Calu3 (cell line): ENCODE measurements at regions of chr3 and their contacts with region 1.

Region 1: GRCh38 chr3:149603126-149604074 is 54.4 kb downstream of the WWTR1 start:
- DNase-seq: peak; percentile 78
- H3K4me3 Mint-ChIP-seq: peak overlapping the region; percentile 58
- H3K27ac Mint-ChIP-seq: peak overlapping the region; percentile 86
- H3K4me1 Mint-ChIP-seq: peaks cover 78% of the 10 kb centered on the region
- H3K27me3 Mint-ChIP-seq: no peaks in the 10 kb centered on the region
- CTCF ChIP-seq: no peak

Region 2: DNA sequence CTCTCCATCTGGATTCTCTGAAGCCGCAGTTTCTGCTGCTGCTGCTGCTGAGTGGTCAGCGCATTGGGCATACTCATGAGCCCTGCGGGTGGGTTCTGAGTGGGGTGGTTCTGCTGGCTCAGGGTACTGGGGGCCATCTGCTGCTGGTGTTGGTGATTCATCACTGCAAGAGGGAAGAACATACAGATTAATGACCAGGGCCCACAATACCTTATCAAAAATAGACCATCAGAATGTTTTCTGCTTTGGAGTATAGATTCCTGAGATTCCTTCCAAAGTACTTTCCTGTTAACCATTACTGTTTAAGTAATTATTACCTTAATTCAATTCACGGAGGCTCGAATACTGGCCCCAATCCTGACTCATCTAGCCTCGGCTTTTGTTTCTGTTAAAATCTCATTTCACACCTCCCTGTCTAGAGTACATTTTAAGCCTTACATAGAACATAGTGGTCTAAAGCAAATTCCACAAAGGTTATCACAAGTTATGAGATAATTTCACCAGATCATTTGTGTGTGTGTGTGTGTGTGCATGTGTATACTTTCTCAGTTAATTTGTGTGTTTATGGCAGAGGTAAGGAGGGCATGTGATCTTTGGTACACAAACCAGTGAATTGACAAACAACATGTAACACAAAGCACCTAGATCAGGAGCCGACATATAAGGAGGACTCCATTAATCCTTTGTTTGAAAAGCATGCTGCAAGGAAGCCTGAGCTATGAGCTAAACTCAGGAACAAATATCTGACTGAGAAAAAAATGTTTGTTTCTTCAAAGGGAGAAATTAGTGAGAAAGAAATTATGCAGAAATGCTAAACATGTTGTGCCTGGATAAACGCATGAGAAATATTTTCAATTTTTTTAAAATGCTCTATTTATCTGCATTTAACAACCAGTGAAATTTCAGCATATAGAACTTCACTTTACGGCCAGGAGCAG is 60.8 kb before region 1 on chr3:
- CTCF ChIA-PET with region 1: interaction called, 5 read pairs
- intact Hi-C with region 1: loop called (anchors 2 kb)
- DNase-seq: peak; percentile 74
- H3K4me3 Mint-ChIP-seq: peak overlapping the region; percentile 64
- H3K27ac Mint-ChIP-seq: peak overlapping the region; percentile 98
- H3K4me1 Mint-ChIP-seq: peaks cover 85% of the 10 kb centered on the region
- H3K27me3 Mint-ChIP-seq: no peaks in the 10 kb centered on the region
- CTCF ChIP-seq: no peak

Region 3: DNA sequence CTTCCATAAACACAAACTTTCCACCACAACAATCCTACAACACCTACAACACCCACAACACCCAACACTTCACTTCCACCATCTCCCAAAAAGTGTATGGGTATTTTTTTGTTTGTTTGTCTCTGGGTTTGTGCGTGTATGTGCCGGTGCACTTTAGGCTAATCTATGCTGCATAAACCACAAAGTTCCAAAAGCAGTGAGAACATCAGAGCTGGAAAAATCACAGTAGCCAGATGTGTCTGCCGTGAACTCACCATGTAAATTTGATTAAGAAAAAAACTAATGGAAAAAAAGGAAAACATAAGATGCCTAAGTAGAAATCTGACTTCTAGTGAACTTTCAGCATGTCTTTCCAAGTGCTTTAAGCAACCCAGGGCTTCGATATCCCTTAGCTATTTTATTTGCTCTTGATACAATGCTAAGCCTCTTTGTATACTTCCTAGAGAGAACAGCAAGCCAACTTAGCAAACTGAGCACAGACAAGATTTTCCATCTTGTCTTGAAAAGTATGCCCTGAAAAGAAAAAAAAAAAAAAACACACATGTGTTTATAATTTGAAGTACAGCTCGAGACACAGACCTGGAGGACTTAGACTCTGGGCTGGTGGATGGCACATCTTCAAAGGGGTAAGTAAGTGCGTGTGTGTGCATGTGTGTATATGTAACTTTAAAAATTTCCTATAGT is 37.0 kb before region 1 on chr3:
- CTCF ChIA-PET with region 1: interaction called, 4 read pairs
- intact Hi-C with region 1: loop called (anchors 5 kb)
- DNase-seq: no peak
- H3K4me3 Mint-ChIP-seq: no peak overlapping the region
- H3K27ac Mint-ChIP-seq: peak overlapping the region; percentile 27
- H3K4me1 Mint-ChIP-seq: peaks cover 63% of the 10 kb centered on the region
- H3K27me3 Mint-ChIP-seq: no peaks in the 10 kb centered on the region
- CTCF ChIP-seq: no peak

Region 4: DNA sequence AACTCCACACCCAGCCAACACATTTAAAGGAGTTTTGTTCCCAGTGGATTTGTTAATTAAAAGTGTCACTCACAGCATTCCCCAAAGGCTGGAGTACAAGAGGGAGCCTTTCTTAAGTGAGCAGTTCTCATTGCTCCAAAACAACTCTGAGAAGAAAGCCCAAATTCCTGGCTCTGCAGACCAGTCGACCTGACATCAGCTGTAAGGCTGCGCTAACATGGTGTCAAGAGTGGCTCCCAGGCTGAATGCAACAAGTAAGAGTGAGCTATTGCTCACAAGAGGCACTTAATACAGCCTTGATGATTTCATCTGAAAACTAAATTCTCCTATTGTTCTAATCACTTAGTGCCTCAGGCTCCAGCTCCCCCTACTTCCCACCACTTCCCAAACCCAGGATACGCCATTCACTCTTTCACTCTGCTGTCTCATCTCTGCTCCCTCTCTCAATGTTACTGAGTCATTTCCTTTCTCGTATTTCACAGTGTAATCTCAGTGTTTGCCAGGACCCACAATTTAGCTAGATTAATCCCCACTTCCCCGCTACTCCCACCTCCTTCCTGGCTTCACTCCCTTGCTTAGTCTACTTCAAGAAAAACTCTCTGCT is 27.3 kb before region 1 on chr3:
- CTCF ChIA-PET with region 1: interaction called, 14 read pairs
- intact Hi-C with region 1: loop called (anchors 2 kb)
- DNase-seq: peak; percentile 61
- H3K4me3 Mint-ChIP-seq: peak overlapping the region; percentile 32
- H3K27ac Mint-ChIP-seq: peak overlapping the region; percentile 92
- H3K4me1 Mint-ChIP-seq: peaks cover 98% of the 10 kb centered on the region
- H3K27me3 Mint-ChIP-seq: no peaks in the 10 kb centered on the region
- CTCF ChIP-seq: no peak

Region 5: DNA sequence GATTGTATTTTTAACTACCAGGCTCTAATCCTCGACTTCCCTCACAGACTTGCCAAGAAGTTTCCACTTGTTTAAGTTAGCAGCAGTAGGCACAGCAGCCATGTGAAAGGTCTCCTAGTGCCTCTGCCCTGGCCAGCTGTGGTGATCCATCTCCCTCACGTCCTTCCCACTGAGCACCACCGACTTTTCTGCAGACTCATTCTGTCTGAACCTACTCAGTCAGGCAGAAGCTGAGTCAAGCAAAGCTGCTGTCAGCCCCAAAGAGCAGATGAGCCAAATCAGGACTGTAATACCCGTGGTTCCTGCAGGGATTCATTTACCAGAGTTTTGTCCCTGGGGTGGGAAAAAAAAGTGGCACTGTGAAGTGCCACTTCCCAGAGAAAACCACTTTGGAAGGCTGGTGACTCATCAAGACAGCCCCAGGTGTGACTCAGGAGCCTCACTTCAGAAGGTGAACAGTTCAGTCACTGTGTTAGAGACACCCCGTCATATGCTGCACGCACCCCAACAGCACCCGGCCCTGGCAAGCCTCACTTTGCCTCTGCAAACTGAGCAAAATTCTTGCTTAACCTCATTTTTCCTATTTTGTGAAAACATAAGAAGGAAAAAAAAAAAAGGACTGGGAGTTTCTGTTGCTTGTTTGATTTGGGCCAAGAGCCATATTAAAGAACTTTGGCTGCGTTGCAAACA is 21.6 kb before region 1 on chr3:
- CTCF ChIA-PET with region 1: interaction called, 14 read pairs
- intact Hi-C with region 1: loop called (anchors 2 kb)
- DNase-seq: peak; percentile 87
- H3K4me3 Mint-ChIP-seq: peak overlapping the region; percentile 53
- H3K27ac Mint-ChIP-seq: peak overlapping the region; percentile 77
- H3K4me1 Mint-ChIP-seq: peaks cover 87% of the 10 kb centered on the region
- H3K27me3 Mint-ChIP-seq: no peaks in the 10 kb centered on the region
- CTCF ChIP-seq: no peak

Region 6: GRCh38 chr3:149592758-149593240 is 10.6 kb before region 1 on chr3:
- CTCF ChIA-PET with region 1: interaction called, 4 read pairs
- intact Hi-C with region 1: loop called (anchors 1 kb)
- DNase-seq: no peak
- H3K4me3 Mint-ChIP-seq: no peak overlapping the region
- H3K27ac Mint-ChIP-seq: peak overlapping the region; percentile 24
- H3K4me1 Mint-ChIP-seq: peaks cover 73% of the 10 kb centered on the region
- H3K27me3 Mint-ChIP-seq: no peaks in the 10 kb centered on the region
- CTCF ChIP-seq: no peak

Region 7: DNA sequence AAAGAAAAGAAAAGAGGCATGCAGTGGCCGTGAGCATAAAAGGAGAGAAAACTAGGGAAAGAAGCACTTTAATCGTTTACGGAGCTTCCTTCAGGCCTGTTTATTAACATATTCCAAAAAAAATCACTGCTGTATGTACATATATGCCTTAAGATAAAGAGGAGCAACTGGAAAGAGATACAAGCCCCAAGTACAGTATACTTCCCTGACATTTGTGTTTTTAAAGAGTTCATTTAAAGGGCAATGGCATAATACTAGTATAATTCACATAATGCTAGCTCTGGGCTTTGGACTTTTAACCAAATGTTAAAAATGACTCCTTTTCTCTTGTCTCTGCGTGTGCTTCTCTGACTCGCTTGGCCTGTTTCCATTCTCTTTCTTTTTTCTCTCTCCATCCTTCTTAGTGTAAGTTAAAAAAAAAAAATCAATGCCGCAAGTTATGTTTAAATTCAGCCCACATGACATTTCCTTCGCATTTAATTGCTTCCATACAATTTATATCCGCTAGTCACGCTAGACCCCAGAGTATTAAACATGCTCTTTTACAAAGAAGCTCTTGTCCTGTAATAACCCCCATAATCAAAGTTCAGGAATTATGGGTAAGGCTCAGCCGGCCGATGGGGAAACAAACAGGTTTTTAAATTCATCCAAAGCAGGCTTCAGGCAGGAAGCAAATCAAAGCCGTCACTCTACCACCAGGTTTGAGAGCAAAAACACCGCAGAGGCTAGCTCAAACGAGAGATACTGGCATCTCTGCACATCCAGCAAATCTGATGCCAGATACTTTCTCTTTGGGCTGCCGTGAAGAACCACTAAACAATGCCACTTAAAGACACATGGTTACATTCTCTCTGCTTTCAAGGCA is 35.1 kb after region 1 on chr3:
- CTCF ChIA-PET with region 1: interaction called, 6 read pairs
- intact Hi-C with region 1: loop called (anchors 2 kb)
- DNase-seq: peak; percentile 65
- H3K4me3 Mint-ChIP-seq: peak overlapping the region; percentile 60
- H3K27ac Mint-ChIP-seq: peak overlapping the region; percentile 78
- H3K4me1 Mint-ChIP-seq: peaks cover 86% of the 10 kb centered on the region
- H3K27me3 Mint-ChIP-seq: no peaks in the 10 kb centered on the region
- CTCF ChIP-seq: no peak